Calu3 (cell line): ENCODE measurements at regions of chr2 and their contacts with region 1.

Region 1: DNA sequence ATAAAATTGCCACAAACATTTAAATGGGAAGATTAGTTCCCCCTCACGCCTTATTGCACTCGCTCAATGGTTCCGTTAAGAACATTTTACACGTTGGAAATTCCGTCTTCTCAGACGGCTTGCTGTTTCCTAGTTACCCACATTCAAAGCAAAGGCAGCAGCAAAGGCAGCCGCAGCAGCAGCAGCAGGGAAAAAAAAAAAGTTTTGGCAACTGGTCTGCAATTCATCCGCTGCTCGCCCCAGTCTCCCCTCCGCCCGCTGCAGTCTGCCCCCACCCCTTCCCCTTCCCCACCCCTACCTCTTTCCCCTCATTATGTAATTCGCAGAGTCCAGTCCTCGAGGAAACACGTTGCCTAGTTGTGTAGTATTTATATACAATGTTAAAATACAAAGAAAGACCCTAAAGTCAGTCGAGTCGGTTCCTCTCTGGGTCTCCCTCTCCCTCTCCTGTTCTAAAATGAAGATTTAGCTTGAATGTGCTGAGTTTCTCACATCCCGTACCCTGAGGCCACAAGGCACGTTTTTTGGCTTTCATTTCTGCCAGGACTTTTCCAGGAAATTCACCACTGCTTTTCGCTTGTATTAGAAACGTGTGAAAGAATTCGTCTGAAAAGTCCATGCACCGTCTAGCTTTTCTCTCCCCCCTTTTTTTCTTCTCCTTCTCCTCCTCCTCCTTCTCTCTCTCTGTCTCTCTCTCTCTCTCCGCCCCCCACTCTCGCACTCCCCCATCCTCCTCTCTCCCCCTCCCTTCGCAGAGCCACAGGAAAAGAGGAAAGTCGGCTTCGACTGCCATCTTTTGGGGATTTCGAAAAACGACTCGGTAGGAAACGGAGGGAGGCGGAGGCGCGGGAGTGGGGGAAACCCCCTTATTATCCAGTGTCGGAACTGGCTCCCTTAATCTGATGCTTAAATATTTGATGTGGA is 140.0 kb downstream of the MEIS1 start:
- DNase-seq: peak; percentile 59
- H3K4me3 Mint-ChIP-seq: peak overlapping the region; percentile 72
- H3K27ac Mint-ChIP-seq: peak overlapping the region; percentile 55
- H3K4me1 Mint-ChIP-seq: peaks cover 26% of the 10 kb centered on the region
- H3K27me3 Mint-ChIP-seq: peaks cover 22% of the 10 kb centered on the region
- CTCF ChIP-seq: peak; percentile 18

Region 2: GRCh38 chr2:66013465-66013864 is 561.5 kb before region 1 on chr2:
- CTCF ChIA-PET with region 1: no interaction called
- intact Hi-C with region 1: loop called (anchors 5 kb)
- DNase-seq: peak; percentile 6
- H3K4me3 Mint-ChIP-seq: no peak overlapping the region
- H3K27ac Mint-ChIP-seq: no peak overlapping the region
- H3K4me1 Mint-ChIP-seq: no peaks in the 10 kb centered on the region
- H3K27me3 Mint-ChIP-seq: no peaks in the 10 kb centered on the region
- CTCF ChIP-seq: no peak

Region 3: DNA sequence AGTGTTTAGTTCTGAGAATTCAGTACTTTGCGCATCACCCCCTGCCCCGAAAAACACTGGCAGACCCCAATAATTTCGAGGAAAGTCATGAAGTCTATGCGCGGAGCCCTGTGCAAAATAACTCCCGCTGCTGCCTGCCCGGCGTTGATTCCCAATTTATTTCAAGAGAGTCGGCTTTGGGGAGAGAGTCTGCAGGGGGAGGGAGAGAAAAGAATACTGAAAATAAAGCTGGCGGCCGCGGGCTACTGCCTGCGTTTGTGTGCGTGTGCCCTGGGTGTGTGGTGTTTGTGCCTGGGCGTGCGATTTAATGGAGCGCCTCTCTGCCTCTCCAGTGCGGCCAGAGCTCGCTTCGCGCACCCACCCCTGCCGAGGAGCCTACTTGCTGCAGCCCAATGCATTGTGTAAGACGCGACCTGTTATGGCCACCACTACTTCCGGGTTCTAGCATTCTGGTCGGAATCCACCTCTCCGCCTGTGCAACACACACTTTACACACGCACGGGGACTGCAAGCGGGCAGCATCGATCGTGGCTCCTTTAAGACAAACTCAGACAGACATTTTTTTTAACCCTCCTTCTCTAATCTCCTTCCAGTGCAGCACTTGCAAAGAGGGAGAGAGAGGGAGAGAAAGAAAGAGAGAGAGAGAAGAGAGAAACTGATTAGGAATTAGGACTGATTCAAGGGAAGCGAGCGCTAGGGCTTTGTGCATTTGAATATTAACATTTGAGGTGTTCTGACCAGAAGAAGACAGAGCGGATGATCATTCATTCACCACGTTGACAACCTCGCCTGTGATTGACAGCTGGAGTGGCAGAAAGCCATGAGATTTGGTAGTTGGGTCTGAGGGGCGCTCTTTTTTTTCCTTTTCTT is 140.0 kb before region 1 on chr2 and contains the start of gene MEIS1:
- CTCF ChIA-PET with region 1: interaction called, 13 read pairs
- intact Hi-C with region 1: loop called (anchors 1 kb)
- DNase-seq: peak; percentile 89
- H3K4me3 Mint-ChIP-seq: peak within 1 kb of the TSS; percentile 74
- H3K27ac Mint-ChIP-seq: peak within 1 kb of the TSS; percentile 75
- H3K4me1 Mint-ChIP-seq: peaks cover 19% of the 10 kb centered on the region
- H3K27me3 Mint-ChIP-seq: no peaks in the 10 kb centered on the region
- CTCF ChIP-seq: no peak
- total RNA-seq, gene MEIS1: 8.1 and 11.5 TPM in 2 replicates

Region 4: DNA sequence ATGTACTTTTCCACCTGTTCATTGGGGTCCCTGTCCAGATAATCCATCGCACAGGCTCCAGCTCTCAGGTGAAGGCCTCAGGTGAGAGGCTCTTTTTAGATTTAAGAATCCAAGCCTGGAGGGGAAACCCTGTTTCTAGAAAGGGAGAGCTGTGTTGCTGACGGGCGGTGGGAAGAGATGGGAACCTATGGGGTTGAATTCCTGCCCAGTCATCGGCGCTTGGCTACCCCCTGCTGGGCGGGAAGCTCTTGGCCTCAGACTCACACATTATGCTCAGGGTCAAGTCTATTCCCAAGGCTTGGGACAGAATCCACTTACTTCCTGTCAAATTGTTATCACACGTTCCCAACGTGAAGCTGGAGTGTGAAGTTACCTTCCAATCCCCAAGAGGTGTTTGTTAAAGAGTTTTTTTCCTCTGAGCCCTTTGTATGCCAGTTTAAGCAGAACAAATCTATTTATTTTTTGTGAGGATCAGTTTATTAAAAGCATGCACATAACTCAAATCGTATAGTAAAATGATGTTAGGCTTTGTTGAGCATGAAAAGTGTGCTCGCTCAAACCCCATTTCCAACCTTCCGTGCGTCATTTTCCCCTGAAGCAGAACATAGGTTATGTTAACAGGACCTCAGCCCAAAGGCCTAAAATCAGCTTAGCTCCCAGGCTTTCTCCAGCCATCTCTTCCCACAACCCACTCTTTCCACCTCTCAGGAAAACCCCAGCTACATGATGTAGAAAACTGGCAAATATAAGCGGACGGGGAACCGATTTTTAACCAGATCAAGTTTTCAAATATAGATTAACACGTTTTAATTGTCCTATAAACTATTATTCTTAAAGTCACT is 640.5 kb after region 1 on chr2:
- CTCF ChIA-PET with region 1: interaction called, 3 read pairs
- intact Hi-C with region 1: loop called (anchors 2 kb)
- DNase-seq: peak; percentile 82
- H3K4me3 Mint-ChIP-seq: no peak overlapping the region
- H3K27ac Mint-ChIP-seq: peak overlapping the region; percentile 32
- H3K4me1 Mint-ChIP-seq: peaks cover 30% of the 10 kb centered on the region
- H3K27me3 Mint-ChIP-seq: no peaks in the 10 kb centered on the region
- CTCF ChIP-seq: peak; percentile 74

Region 5: GRCh38 chr2:67840460-67841068 is 1265.6 kb after region 1 on chr2:
- CTCF ChIA-PET with region 1: no interaction called
- intact Hi-C with region 1: loop called (anchors 10 kb)
- DNase-seq: peak; percentile 82
- H3K4me3 Mint-ChIP-seq: no peak overlapping the region
- H3K27ac Mint-ChIP-seq: no peak overlapping the region
- H3K4me1 Mint-ChIP-seq: peaks cover 11% of the 10 kb centered on the region
- H3K27me3 Mint-ChIP-seq: no peaks in the 10 kb centered on the region
- CTCF ChIP-seq: peak; percentile 63